PC-3 (cell line): ENCODE measurements at regions of chr15 and their contacts with region 1.

Region 1: GRCh38 chr15:96234109-96234892 is 96.2 kb upstream of the NR2F2 start:
- DNase-seq: peak; percentile 88
- ATAC-seq: peak; percentile 55
- H3K4me3 ChIP-seq: peak overlapping the region; percentile 49
- H3K27ac ChIP-seq: peak overlapping the region; percentile 96
- H3K4me1 ChIP-seq: peaks cover 47% of the 10 kb centered on the region
- H3K27me3 ChIP-seq: no peaks in the 10 kb centered on the region
- CTCF ChIP-seq: no peak

Region 2: DNA sequence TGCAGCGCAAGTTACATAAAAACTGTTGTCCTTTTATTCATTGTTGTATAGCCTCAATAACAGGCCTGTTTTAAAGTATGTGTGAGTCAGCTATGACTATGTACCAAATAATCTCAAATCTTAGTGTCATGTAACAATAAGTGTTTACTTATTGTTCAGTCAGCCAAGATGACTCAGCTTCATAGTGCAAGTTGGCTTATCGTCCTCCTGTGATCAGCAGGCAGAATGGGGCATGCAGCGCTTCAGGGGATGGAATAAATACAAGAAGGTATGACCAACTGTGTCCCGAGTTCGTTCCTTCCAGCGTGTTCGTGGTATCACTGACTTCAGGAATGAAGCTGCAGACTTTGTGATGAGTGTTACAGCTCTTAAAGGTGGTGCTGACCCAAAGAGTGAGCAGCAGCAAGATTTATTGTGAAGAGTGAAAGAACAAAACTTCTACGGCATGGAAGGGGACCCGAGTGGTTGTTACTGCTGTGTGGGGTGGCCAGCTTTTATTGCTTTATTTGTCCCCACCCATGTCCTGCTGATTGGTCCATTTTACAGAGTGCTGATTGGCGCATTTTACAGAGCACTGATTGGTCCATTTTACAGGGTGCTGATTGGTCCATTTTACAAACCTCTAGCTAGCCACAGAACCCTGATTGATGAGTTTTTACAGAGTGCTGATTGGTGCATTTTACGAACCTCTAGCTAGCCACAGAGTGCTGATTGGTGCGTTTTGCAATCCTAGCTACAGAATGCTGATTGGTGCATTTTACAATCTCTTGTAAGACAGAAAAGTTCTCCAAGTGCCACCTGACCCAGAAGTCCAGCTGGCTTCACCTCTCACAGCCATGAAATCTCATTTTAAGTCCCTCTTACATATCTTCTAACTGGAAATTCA is 987.0 kb before region 1 on chr15:
- CTCF ChIA-PET with region 1: no interaction called
- POLR2A ChIA-PET with region 1: no interaction called
- intact Hi-C with region 1: loop called (anchors 5 kb)
- DNase-seq: peak; percentile 97
- ATAC-seq: peak; percentile 99
- H3K4me3 ChIP-seq: peak overlapping the region; percentile 12; the same call in 1 of the 2 replicates
- H3K27ac ChIP-seq: peak overlapping the region; percentile 74
- H3K4me1 ChIP-seq: peaks cover 18% of the 10 kb centered on the region
- H3K27me3 ChIP-seq: no peaks in the 10 kb centered on the region
- CTCF ChIP-seq: no peak

Region 3: DNA sequence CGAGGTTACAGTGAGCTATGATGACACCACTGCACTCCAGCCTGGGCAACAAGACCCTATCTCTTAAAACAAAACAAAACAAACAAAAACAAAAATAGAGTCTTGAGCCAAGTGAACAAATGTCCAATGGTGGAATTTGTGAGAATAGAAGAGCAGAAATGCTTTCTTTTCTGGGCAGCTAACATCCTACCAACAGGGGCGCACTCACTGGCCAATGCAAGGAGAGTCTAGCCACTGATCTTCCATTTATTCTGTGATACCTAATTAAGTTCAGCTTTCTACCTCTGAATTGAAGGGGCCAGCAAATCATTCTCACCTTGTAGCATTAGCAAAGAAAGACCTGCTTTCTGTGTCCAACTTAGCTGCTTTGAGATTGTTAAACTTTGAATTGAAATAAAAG is 205.7 kb before region 1 on chr15:
- CTCF ChIA-PET with region 1: no interaction called
- POLR2A ChIA-PET with region 1: no interaction called
- intact Hi-C with region 1: loop called (anchors 2 kb)
- DNase-seq: no peak
- ATAC-seq: no peak
- H3K4me3 ChIP-seq: no peak overlapping the region
- H3K27ac ChIP-seq: no peak overlapping the region
- H3K4me1 ChIP-seq: peaks cover 11% of the 10 kb centered on the region
- H3K27me3 ChIP-seq: no peaks in the 10 kb centered on the region
- CTCF ChIP-seq: 0 out of 2 replicates have a peak, but pooled peaks have one; percentile 18

Region 4: DNA sequence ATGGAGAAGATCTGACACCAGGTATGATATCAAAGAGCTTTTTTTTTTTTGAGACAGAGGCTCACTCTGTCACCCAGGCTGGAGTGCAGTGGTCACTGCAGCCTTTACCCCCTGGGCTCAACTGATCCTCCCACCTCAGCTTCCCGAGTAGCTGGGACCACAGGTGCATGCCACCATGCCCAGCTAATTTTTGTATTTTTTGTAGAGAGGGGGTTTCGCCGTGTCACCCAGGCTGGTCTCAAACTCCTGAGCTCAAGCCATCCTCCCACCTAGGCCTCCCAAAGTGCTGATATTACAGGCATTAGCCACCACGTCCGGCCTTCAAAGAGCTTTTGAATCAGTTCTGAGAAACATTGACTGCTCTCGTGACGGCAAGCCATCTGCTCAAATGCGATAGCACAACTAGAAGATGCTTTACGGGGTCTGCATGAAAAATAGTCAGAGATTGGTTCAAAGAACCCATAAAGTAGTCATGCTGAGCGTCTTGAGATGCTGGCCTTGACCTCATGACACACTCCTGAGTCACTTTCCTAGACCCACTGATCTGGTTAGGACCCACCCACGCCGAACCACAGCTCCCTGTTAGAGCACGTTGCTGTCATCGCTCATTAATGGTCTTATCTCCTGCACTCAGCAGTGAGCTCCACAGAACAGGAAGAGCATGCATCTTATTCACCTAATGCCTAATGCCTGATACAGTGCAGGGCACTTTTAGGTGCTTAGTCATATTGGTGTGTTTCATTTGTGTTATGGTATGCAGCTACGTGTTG is 39.2 kb after region 1 on chr15:
- CTCF ChIA-PET with region 1: interaction called, 5 read pairs
- POLR2A ChIA-PET with region 1: interaction called, 10 read pairs
- intact Hi-C with region 1: loop called (anchors 2 kb)
- DNase-seq: peak; percentile 98
- ATAC-seq: peak; percentile 91
- H3K4me3 ChIP-seq: peak overlapping the region; percentile 49; the same call in 1 of the 2 replicates
- H3K27ac ChIP-seq: peak overlapping the region; percentile 88
- H3K4me1 ChIP-seq: peaks cover 76% of the 10 kb centered on the region
- H3K27me3 ChIP-seq: no peaks in the 10 kb centered on the region
- CTCF ChIP-seq: no peak

Region 5: GRCh38 chr15:96321639-96322535 is 87.6 kb after region 1 on chr15:
- CTCF ChIA-PET with region 1: interaction called, 4 read pairs
- POLR2A ChIA-PET with region 1: interaction called, 3 read pairs
- intact Hi-C with region 1: loop called (anchors 1 kb)
- DNase-seq: peak; percentile 16
- ATAC-seq: peak; percentile 14
- H3K4me3 ChIP-seq: peak overlapping the region; percentile 66
- H3K27ac ChIP-seq: no peak overlapping the region
- H3K4me1 ChIP-seq: peaks cover 29% of the 10 kb centered on the region
- H3K27me3 ChIP-seq: no peaks in the 10 kb centered on the region
- CTCF ChIP-seq: no peak